H1 (cell line): ENCODE measurements at regions of chr11 and their contacts with region 1.

Region 1: DNA sequence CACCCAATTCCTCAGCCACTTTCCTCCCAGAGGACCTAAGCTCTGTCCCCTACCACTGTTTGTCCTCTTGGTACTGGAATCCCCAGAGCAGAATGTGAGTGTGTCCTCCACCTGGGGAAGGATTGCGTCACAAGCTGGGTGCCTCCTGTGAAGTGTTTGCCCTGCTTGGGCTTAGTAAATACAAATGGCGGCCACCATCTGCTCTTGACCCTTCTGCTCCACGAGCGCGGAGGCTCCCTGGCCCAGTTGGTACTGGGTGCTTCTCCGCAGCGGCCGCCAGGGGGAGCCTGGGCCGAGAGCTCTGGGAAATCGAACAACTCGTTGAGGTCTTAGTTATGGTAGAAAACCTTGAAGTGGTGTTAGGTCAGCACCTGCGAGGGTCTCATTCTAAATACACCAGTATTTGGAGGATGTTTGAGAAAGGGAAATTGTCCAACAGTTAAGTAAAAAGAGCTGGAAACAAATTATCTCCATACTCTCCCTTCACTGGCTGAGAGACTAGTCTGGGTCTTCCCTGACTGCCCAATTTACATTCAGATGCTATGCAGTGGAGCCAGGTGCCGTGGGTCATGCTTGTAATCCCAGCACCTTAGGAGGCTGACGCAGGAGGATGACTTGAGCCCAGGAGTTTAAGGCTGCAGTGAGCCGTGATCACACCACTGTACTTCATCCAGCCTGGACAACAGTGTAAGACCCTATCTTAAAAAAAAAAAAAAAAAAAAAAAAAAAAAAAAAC is 74.6 kb upstream of the TEAD1 start:
- DNase-seq: peak; percentile 57 to 89
- H3K4me3 ChIP-seq: no peak overlapping the region
- H3K27ac ChIP-seq: no peak overlapping the region
- H3K4me1 ChIP-seq: peaks cover 0 to 4% (median 0%) of the 10 kb centered on the region in 4 experiments; a peak in 1 of 7 replicates
- H3K27me3 ChIP-seq: no peaks in the 10 kb centered on the region
- CTCF ChIP-seq: peak; percentile 81 to 91 (median 87)
- EP300 ChIP-seq: 0 out of 3 replicates have a peak, but pooled peaks of 1 of the 2 experiments have one; percentile 65
- POLR2A ChIP-seq: no peak
- RAD21 ChIP-seq: peak; percentile 74 to 90

Region 2: DNA sequence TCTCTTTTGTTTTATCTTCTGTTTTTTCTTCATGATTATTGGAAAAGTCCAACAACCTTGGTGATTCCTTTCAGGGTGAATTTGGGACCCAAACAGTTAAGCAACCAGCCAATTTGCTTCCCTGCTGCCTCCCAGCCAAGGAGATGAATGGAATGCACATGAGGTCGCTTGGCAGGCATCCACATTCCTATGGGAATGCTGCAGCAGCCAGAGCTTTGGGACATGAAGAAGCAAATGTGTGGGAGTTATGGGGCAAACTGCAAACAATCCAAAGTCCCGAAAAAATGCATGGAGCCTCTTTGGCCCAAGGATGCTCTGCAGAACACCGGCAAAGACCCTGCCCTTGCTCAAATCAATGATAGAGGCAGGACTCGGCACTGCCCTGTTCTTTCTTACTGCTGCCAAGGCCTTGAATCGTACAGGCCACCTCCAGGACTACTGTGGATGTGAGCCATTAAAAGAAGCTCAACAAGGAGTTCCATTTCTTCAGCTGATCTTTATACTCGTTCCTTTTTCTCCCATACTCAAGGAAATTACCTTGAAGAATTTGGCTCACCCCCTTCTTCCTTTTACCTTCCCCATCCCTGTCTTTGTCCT is 42.7 kb before region 1 on chr11:
- CTCF ChIA-PET with region 1: interaction called, 12 read pairs
- POLR2A ChIA-PET with region 1: no interaction called
- DNase-seq: peak; percentile 49 to 51
- H3K4me3 ChIP-seq: no peak overlapping the region; a peak in 1 of 8 replicates
- H3K27ac ChIP-seq: no peak overlapping the region
- H3K4me1 ChIP-seq: peaks cover 0 to 18% (median 5%) of the 10 kb centered on the region in 4 experiments; a peak in 4 of 7 replicates
- H3K27me3 ChIP-seq: peaks cover 0 to 1% (median 0%) of the 10 kb centered on the region in 4 experiments; a peak in 1 of 7 replicates
- CTCF ChIP-seq: no peak
- EP300 ChIP-seq: peak in 1 of 2 experiments; percentile 55; a peak in 1 of 3 replicates
- POLR2A ChIP-seq: no peak
- RAD21 ChIP-seq: peak in 1 of 2 experiments; percentile 1; a peak in 2 of 4 replicates

Region 3: GRCh38 chr11:12577725-12578644 is 21.6 kb before region 1 on chr11:
- CTCF ChIA-PET with region 1: interaction called, 11 read pairs
- POLR2A ChIA-PET with region 1: no interaction called
- DNase-seq: no peak
- H3K4me3 ChIP-seq: no peak overlapping the region
- H3K27ac ChIP-seq: no peak overlapping the region
- H3K4me1 ChIP-seq: no peaks in the 10 kb centered on the region
- H3K27me3 ChIP-seq: no peaks in the 10 kb centered on the region
- CTCF ChIP-seq: peak; percentile 20 to 40 (median 21)
- EP300 ChIP-seq: no peak
- POLR2A ChIP-seq: no peak
- RAD21 ChIP-seq: peak; percentile 23 to 44; a peak in 2 of 4 replicates

Region 4: GRCh38 chr11:12587333-12587991 is 12.1 kb before region 1 on chr11:
- CTCF ChIA-PET with region 1: interaction called, 16 read pairs
- POLR2A ChIA-PET with region 1: no interaction called
- DNase-seq: no peak
- H3K4me3 ChIP-seq: no peak overlapping the region
- H3K27ac ChIP-seq: no peak overlapping the region
- H3K4me1 ChIP-seq: peaks cover 0 to 5% (median 0%) of the 10 kb centered on the region in 4 experiments; a peak in 2 of 7 replicates
- H3K27me3 ChIP-seq: no peaks in the 10 kb centered on the region; a peak in 3 of 7 replicates
- CTCF ChIP-seq: no peak
- EP300 ChIP-seq: no peak
- POLR2A ChIP-seq: no peak
- RAD21 ChIP-seq: 0 out of 4 replicates have a peak, but pooled peaks of 1 of the 2 experiments have one; percentile 9

Region 5: DNA sequence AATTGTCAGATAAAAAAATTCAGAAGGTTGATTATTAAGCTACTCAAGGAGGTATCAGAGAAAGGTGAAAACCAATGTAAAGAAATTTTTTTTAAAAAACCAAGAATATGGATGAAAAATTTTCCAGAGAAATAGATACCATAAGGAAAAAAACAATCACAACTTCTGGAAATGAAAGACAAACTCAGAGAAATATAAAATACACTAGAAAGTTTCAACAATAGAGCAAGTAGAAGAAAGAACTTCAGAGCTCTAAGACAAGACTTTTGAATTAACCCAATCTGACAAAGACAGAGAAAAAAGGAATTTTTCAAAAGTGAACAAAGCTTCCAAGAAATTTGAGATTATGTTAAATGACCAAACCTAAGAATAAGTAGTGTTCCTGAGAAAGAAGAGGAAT is 11.8 kb after region 1 on chr11:
- CTCF ChIA-PET with region 1: interaction called, 27 read pairs
- POLR2A ChIA-PET with region 1: no interaction called
- DNase-seq: no peak
- H3K4me3 ChIP-seq: no peak overlapping the region
- H3K27ac ChIP-seq: no peak overlapping the region
- H3K4me1 ChIP-seq: no peaks in the 10 kb centered on the region
- H3K27me3 ChIP-seq: no peaks in the 10 kb centered on the region
- CTCF ChIP-seq: no peak
- EP300 ChIP-seq: no peak
- POLR2A ChIP-seq: no peak
- RAD21 ChIP-seq: no peak

Region 6: GRCh38 chr11:12642040-12642439 is 42.5 kb after region 1 on chr11:
- CTCF ChIA-PET with region 1: interaction called, 12 read pairs
- POLR2A ChIA-PET with region 1: no interaction called
- DNase-seq: no peak
- H3K4me3 ChIP-seq: no peak overlapping the region
- H3K27ac ChIP-seq: no peak overlapping the region
- H3K4me1 ChIP-seq: 0 out of 7 replicates have a peak, but pooled peaks cover 0 to 1% (median 0%) of the 10 kb centered on the region in 4 experiments
- H3K27me3 ChIP-seq: no peaks in the 10 kb centered on the region
- CTCF ChIP-seq: no peak
- EP300 ChIP-seq: no peak
- POLR2A ChIP-seq: no peak
- RAD21 ChIP-seq: no peak

Region 7: GRCh38 chr11:12888525-12889158 is 289.1 kb after region 1 on chr11:
- CTCF ChIA-PET with region 1: interaction called, 58 read pairs
- POLR2A ChIA-PET with region 1: no interaction called
- DNase-seq: peak; percentile 65 to 89
- H3K4me3 ChIP-seq: no peak overlapping the region
- H3K27ac ChIP-seq: no peak overlapping the region
- H3K4me1 ChIP-seq: peaks cover 0 to 7% (median 3%) of the 10 kb centered on the region in 4 experiments; a peak in 3 of 7 replicates
- H3K27me3 ChIP-seq: no peaks in the 10 kb centered on the region
- CTCF ChIP-seq: peak; percentile 68 to 81 (median 72)
- EP300 ChIP-seq: no peak
- POLR2A ChIP-seq: no peak
- RAD21 ChIP-seq: peak; percentile 87 to 92